Activated CD4-positive, alpha-beta memory T cell treated with anti-CD3 and anti-CD28 coated beads for 36 hours (primary cell): ENCODE measurements at regions of chr10 and their contacts with region 1.

Region 1: DNA sequence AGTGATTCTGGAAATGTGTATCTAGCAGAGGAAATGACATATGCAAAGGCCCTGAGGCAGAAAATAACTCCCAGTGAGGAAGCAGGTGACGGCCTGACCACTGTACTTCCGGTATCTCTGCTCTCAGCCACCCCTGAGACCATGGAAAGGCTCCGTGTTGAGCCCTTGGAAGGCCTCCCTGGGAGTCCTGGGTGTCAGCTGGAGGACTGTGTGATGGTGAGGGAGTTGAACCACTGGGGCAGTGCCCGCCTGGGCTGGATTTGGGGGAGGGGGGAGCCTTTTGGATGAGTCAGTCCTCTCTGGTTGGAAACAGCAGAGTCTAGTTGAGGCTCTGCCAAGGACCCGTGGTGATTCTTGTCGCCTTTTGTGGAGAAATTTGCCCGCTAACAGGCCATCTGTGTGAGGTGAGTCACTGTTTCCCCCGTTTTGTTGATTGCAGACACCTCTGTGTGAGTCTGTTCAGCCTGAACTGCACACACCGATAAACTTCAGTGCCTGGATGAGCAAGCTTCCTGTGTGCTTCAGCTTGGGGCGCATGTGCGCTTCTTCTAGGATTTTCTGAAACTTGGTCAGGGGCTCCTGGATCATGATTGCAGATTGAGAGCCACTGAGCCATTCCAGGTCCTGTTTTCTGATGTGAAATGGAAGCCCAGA is 98.6 kb downstream of the GRK5 start:
- DNase-seq: peak; percentile 95
- H3K4me3 Mint-ChIP-seq: peak overlapping the region; percentile 63
- H3K27ac Mint-ChIP-seq: peak overlapping the region; percentile 100
- H3K4me1 Mint-ChIP-seq: peaks cover 67% of the 10 kb centered on the region
- H3K27me3 Mint-ChIP-seq: no peaks in the 10 kb centered on the region

Region 2: DNA sequence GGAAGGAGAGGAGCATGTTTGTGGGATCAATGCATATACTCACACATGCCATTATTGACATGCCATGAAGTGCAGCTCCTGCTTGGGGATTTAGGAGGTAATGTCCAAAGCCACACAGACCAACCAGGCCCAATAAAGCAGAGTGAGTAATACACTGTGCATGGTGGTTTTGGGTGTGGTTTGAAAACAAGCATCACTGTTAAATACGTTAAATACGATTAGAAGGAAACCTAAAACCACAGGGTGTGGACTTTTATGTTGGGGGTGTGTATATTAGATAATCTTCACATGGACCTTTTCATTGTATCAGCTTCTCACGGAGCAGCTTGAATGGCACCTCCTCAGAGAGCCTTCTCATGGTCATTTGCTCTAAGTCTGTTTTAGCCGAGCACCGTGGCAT is 215.0 kb before region 1 on chr10:
- CTCF ChIA-PET with region 1: no interaction called
- POLR2A ChIA-PET with region 1: no interaction called
- intact Hi-C with region 1: loop called (anchors 2 kb)
- DNase-seq: peak; percentile 55
- H3K4me3 Mint-ChIP-seq: peak overlapping the region; percentile 25
- H3K27ac Mint-ChIP-seq: peak overlapping the region; percentile 74
- H3K4me1 Mint-ChIP-seq: peaks cover 47% of the 10 kb centered on the region
- H3K27me3 Mint-ChIP-seq: no peaks in the 10 kb centered on the region

Region 3: GRCh38 chr10:119268871-119269506 is 37.0 kb before region 1 on chr10:
- CTCF ChIA-PET with region 1: interaction called, 3 read pairs
- POLR2A ChIA-PET with region 1: interaction called, 3 read pairs
- intact Hi-C with region 1: loop called (anchors 1 kb)
- DNase-seq: peak; percentile 83
- H3K4me3 Mint-ChIP-seq: peak overlapping the region; percentile 7
- H3K27ac Mint-ChIP-seq: peak overlapping the region; percentile 97
- H3K4me1 Mint-ChIP-seq: peaks cover 43% of the 10 kb centered on the region
- H3K27me3 Mint-ChIP-seq: no peaks in the 10 kb centered on the region

Region 4: GRCh38 chr10:119478111-119478802 is 172.3 kb after region 1 on chr10:
- CTCF ChIA-PET with region 1: no interaction called
- POLR2A ChIA-PET with region 1: no interaction called
- intact Hi-C with region 1: loop called (anchors 5 kb)
- DNase-seq: peak; percentile 67
- H3K4me3 Mint-ChIP-seq: peak overlapping the region; percentile 17
- H3K27ac Mint-ChIP-seq: peak overlapping the region; percentile 49
- H3K4me1 Mint-ChIP-seq: peaks cover 33% of the 10 kb centered on the region
- H3K27me3 Mint-ChIP-seq: no peaks in the 10 kb centered on the region

Region 5: GRCh38 chr10:119596537-119597404 is 290.8 kb after region 1 on chr10 and contains the start of gene TIAL1:
- CTCF ChIA-PET with region 1: no interaction called
- POLR2A ChIA-PET with region 1: no interaction called
- intact Hi-C with region 1: loop called (anchors 5 kb)
- DNase-seq: peak; percentile 97
- H3K4me3 Mint-ChIP-seq: peak within 1 kb of the TSS; percentile 89
- H3K27ac Mint-ChIP-seq: peak within 1 kb of the TSS; percentile 97
- H3K4me1 Mint-ChIP-seq: peaks cover 42% of the 10 kb centered on the region
- H3K27me3 Mint-ChIP-seq: no peaks in the 10 kb centered on the region
- total RNA-seq, gene TIAL1: 177 TPM